Sciatic nerve (tissue), 2 donors: ENCODE measurements at regions of chr20 and their contacts with region 1.

Region 1: DNA sequence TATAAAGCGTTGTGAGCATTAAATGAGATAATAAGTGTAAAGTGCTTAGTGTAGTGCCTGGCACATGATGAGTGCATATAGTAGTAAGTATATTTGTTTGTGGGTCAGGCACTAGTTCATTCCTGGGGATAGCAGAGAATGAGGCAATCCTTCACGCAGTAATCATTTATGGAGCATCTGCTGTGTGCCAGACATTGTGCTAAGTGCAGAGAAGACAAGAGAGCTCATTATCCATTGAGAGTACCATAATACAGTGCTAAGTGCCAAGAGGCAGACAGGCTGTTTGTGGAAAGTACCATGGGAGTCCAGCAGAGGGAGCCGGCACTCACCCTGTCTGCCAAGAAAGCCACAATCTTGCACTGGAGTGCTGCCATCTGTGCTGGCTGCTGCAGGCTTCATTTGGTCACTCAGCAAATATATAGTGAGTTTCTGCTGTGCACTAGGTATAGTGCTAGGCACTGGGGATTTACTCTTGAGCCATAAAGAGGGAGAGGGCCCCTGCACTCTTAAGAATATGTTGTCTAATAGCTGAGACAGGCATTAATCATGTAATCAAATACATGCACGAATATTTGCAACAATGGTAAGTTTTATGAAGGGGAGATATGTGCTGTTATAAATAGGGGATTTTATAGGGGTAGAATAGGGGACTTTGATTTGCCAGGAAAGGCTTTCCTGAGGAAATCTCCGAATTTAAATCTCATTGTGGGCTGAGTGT is 12.9 kb upstream of the MROH8 start:
- DNase-seq: peak; percentile 94
- ATAC-seq: peak; percentile 94

Region 2: DNA sequence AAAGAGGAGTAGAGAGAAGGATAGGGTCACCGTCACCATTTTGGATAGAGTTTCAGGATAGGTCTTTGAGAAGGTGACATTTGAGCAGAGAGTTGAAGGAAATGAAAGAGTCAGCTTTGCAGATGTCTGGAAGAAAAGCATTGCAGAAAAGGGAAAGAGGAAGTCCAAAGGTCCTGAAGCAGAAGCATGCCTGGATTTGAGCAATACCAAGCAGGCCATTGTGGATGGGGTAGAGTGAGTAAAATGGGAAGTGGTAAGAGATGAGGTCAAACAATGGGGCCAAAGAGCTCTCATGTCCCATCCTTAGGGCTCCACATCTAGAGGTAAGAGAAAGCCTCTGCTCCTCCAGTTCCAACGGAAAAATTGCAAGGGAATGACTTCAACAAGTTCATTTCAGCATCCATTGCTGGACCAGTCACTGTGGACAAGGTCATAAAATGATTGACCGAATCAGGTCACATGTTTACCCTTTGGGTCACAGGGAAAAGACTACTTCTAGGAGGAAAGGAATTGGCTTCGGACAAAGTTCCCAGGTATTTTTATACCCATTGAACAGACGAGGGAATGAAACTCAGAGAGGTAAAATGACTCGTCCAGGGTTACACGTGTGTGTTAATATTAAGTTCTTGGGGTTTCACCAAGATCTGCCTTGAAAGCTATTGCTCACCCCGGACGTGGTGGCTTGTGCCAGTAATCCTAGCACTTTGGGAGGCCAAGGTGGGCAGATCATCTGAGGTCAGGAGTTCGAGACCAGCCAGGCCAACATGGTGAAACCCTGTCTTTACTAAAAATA is 234.2 kb before region 1 on chr20:
- intact Hi-C with region 1: no loop called
- DNase-seq: no peak
- ATAC-seq: peak; percentile 48

Region 3: GRCh38 chr20:37276494-37277252 is 84.4 kb after region 1 on chr20:
- intact Hi-C with region 1: loop called (anchors 10 kb)
- DNase-seq: peak; percentile 66
- ATAC-seq: peak; percentile 95

Region 4: GRCh38 chr20:37534401-37535157 is 342.3 kb after region 1 on chr20:
- intact Hi-C with region 1: loop called (anchors 5 kb)
- DNase-seq: peak; percentile 53
- ATAC-seq: peak; percentile 92